Calu3 (cell line): ENCODE measurements at regions of chr3 and their contacts with region 1.

Region 1: DNA sequence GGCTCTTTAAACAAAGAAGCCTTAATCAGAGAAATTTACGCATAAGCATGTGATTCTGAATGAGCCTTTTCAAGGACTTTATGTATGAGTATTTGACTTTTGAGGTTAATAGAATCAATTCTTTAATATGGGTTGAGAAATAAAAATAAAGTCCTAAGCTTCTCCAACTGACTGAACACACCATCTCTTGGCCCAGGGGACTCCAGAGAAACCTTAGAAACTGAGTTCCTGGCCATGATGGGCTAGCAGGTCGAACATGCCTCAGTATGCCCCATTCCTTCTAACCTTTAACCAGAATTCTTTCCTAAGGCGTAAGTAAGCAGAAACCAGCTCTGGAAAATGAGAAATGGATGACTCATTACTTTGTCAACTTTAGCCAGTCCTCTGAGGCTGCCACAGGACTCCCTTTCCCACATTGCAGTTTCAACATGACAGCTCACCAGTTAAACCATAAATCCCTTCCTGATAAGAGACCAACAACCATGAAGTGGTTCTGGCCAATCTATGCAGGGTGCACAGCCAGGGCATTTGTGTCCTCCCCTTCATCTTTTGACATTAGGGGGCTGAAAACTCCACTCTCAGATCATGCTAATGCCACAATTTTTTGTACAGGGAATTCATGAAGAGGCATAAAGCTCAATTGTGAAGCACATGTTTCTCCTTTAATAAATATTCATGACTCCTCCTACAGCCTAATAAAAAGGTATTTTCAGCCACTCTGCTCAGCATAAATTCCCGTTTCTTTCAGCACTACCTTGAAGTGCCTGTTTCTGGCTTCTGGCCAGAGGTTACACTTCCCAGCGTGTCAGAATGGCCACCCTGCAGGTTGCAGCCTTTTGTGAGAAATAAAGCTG is 33.3 kb downstream of the TM4SF18 start:
- DNase-seq: peak; percentile 82
- H3K4me3 Mint-ChIP-seq: peak overlapping the region; percentile 49
- H3K27ac Mint-ChIP-seq: peak overlapping the region; percentile 66
- H3K4me1 Mint-ChIP-seq: peaks cover 63% of the 10 kb centered on the region
- H3K27me3 Mint-ChIP-seq: no peaks in the 10 kb centered on the region
- CTCF ChIP-seq: no peak

Region 2: GRCh38 chr3:149314807-149315578 is 14.8 kb after region 1 on chr3:
- CTCF ChIA-PET with region 1: interaction called, 11 read pairs
- intact Hi-C with region 1: loop called (anchors 1 kb)
- DNase-seq: no peak
- H3K4me3 Mint-ChIP-seq: peak overlapping the region; percentile 16
- H3K27ac Mint-ChIP-seq: peak overlapping the region; percentile 91
- H3K4me1 Mint-ChIP-seq: peaks cover 74% of the 10 kb centered on the region
- H3K27me3 Mint-ChIP-seq: no peaks in the 10 kb centered on the region
- CTCF ChIP-seq: no peak

Region 3: GRCh38 chr3:149330609-149331331 is 30.6 kb after region 1 on chr3:
- CTCF ChIA-PET with region 1: interaction called, 8 read pairs
- intact Hi-C with region 1: loop called (anchors 1 kb)
- DNase-seq: peak; percentile 43
- H3K4me3 Mint-ChIP-seq: no peak overlapping the region
- H3K27ac Mint-ChIP-seq: peak overlapping the region; percentile 14
- H3K4me1 Mint-ChIP-seq: peaks cover 39% of the 10 kb centered on the region
- H3K27me3 Mint-ChIP-seq: no peaks in the 10 kb centered on the region
- CTCF ChIP-seq: no peak

Region 4: DNA sequence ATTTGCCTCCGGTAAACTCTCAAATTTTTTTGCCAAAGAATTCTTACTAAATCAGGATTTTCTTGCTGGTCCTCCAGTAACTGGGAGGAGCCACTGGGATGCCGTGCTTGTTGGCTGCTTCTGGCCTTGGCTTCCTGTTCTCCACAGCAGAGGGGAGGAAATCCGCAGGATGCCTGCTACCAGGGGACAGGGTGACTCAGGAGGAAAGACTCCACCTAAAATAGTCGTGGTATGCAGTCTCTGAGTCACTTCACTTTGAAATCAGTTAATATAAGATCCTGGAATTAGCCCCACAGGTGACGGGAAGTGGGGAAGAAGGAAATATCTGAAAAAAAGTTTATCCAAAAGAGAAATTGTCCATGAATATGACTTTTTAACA is 39.8 kb after region 1 on chr3:
- CTCF ChIA-PET with region 1: interaction called, 7 read pairs
- intact Hi-C with region 1: loop called (anchors 2 kb)
- DNase-seq: peak; percentile 97
- H3K4me3 Mint-ChIP-seq: no peak overlapping the region
- H3K27ac Mint-ChIP-seq: peak overlapping the region; percentile 89
- H3K4me1 Mint-ChIP-seq: peaks cover 44% of the 10 kb centered on the region
- H3K27me3 Mint-ChIP-seq: no peaks in the 10 kb centered on the region
- CTCF ChIP-seq: no peak

Region 5: GRCh38 chr3:149384911-149385321 is 84.8 kb after region 1 on chr3:
- CTCF ChIA-PET with region 1: no interaction called
- intact Hi-C with region 1: loop called (anchors 5 kb)
- DNase-seq: peak; percentile 64
- H3K4me3 Mint-ChIP-seq: peak overlapping the region; percentile 59
- H3K27ac Mint-ChIP-seq: peak overlapping the region; percentile 97
- H3K4me1 Mint-ChIP-seq: peaks cover 85% of the 10 kb centered on the region
- H3K27me3 Mint-ChIP-seq: no peaks in the 10 kb centered on the region
- CTCF ChIP-seq: no peak